ENCODE measurements at regions of chrX and their contacts with region 1.

Region 1: GRCh38 chrX:108304210-108304609 is 134.0 kb downstream of the COL4A6 start:
- DNase-seq: no peak
- ATAC-seq: no peak
- H3K4me3 ChIP-seq: no peak overlapping the region
- H3K27ac ChIP-seq: no peak overlapping the region
- H3K4me1 ChIP-seq: no peaks in the 10 kb centered on the region
- H3K27me3 ChIP-seq: no peaks in the 10 kb centered on the region; the same call in 1 of the 2 replicates
- CTCF ChIP-seq: peak; percentile 39; the same call in 1 of the 2 replicates

Region 2: DNA sequence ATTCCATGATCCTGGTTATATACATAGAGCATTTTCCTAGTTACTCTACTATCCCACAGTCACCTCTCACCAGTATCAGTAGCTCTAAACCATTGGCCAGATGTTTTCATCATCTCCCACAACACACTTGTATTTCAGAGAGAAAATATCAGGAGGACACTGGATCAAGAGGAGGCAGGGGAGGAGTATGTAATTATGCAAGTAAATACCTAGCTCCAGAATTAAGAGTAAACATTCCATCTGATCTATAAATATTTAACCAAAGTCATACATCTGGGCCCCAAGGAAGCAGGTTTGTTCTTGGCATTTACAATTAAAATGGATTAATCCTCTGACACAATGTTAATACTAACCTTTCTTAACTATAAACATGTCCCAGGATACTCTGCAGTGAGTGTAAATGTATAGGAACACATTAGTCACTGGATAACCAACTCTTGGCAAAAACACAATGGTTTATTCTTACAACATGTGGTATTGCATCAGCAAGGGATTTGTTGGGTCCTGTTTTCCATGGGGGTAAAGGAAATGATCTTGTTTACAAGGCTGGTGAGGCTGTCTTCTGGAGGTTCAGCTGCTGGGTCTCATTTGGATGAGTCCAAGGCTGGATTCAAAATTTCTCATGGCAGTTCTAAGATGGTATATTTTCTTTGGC is 42.5 kb before region 1 on chrX:
- CTCF ChIA-PET with region 1: no interaction called
- POLR2A ChIA-PET with region 1: no interaction called
- in situ Hi-C with region 1: no loop called
- intact Hi-C with region 1: no loop called
- DNase-seq: no peak
- ATAC-seq: no peak
- H3K4me3 ChIP-seq: no peak overlapping the region
- H3K27ac ChIP-seq: no peak overlapping the region
- H3K4me1 ChIP-seq: no peaks in the 10 kb centered on the region
- H3K27me3 ChIP-seq: no peaks in the 10 kb centered on the region
- CTCF ChIP-seq: no peak

Region 3: GRCh38 chrX:108537005-108537404 is 232.8 kb after region 1 on chrX:
- CTCF ChIA-PET with region 1: no interaction called
- POLR2A ChIA-PET with region 1: no interaction called
- in situ Hi-C with region 1: no loop called
- intact Hi-C with region 1: loop called (anchors 5 kb)
- DNase-seq: peak; percentile 10
- ATAC-seq: no peak; the same call in 1 of the 2 replicates
- H3K4me3 ChIP-seq: no peak overlapping the region
- H3K27ac ChIP-seq: no peak overlapping the region
- H3K4me1 ChIP-seq: no peaks in the 10 kb centered on the region
- H3K27me3 ChIP-seq: no peaks in the 10 kb centered on the region
- CTCF ChIP-seq: peak; percentile 70; the same call in 1 of the 2 replicates

Measured in Panc1 (cell line).